OCI-LY7 (cell line): ENCODE measurements at regions of chr6 and their contacts with region 1.

Region 1: DNA sequence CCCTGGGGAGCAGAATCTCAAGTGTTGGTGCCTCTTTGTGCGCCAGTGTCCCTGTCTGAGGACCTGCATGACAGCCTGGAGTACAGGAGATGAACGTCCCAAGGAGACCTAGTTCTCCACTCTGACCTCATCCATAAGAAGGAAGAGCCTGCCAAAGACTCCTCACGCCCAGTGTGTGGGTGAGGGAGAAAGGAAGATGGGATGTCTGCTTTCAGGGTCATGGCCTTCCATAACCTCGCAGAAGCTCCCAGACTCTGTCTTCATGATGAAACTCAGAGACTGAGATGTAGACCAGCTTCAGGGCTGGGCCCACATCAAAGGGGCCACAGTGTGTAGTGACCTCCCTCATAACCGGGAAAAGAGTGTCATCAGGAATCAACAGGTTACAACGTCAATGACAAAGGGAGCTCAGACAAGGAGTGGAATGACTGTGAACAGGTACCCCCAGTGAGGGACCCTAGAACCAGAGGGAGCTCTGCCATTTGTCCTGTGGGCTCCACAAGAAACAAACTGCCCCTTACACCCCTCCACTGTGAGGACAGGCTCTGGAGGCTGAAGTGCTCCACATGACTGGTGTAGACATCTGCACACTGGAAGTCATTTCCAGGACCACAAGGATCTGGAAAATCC is 8.1 kb downstream of the HLA-DQB1 start:
- DNase-seq: no peak
- H3K4me3 ChIP-seq: peak overlapping the region; percentile 2
- H3K27ac ChIP-seq: peak overlapping the region; percentile 76
- H3K4me1 ChIP-seq: peaks cover 36% of the 10 kb centered on the region
- CTCF ChIP-seq: no peak

Region 2: DNA sequence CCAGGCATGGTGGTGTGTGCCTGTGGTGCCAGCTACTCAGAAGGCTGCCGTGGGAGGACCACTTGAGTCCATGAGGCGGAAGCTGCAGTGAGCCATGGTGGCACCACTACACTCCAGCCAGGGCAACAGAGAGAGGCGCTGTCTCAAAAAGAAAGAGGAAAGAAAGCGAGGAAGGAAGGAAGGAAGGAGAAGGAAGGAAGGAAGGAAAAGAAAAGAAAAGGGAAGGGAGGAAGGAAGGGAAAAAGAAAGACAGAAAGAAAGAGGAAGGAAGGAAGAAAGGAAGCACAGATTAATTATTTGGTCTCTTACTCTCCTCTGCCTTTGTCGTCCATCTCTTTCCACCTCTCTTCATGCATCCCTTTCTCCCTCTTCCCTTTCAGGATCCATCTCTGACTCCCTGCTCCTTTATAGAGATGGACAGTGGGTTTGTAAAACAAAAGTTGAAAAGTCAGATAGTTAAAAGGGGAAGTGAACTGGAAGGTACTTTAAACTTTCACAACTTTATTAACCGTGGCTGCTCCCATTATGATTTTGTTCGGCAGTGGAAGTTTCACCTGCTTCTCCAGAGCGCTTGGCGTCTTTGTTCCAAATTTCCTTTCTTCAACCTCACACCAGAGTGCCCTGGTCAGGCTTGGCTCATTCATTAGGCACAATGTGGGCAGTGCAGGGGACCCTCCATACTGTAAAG is 19.7 kb before region 1 on chr6:
- CTCF ChIA-PET with region 1: no interaction called
- POLR2A ChIA-PET with region 1: no interaction called
- intact Hi-C with region 1: no loop called
- DNase-seq: no peak
- H3K4me3 ChIP-seq: no peak overlapping the region
- H3K27ac ChIP-seq: no peak overlapping the region
- H3K4me1 ChIP-seq: peaks cover 28% of the 10 kb centered on the region
- CTCF ChIP-seq: no peak

Region 3: GRCh38 chr6:32752580-32752979 is 94.2 kb after region 1 on chr6:
- CTCF ChIA-PET with region 1: no interaction called
- POLR2A ChIA-PET with region 1: no interaction called
- intact Hi-C with region 1: loop called (anchors 5 kb)
- DNase-seq: no peak
- H3K4me3 ChIP-seq: no peak overlapping the region
- H3K27ac ChIP-seq: no peak overlapping the region
- H3K4me1 ChIP-seq: no peaks in the 10 kb centered on the region
- CTCF ChIP-seq: no peak

Region 4: GRCh38 chr6:33271458-33272274 is 613.3 kb after region 1 on chr6 and contains the starts of genes RPS18 and VPS52:
- CTCF ChIA-PET with region 1: no interaction called
- POLR2A ChIA-PET with region 1: no interaction called
- intact Hi-C with region 1: no loop called
- DNase-seq: peak; percentile 99
- H3K4me3 ChIP-seq: peak within 1 kb of the TSS; percentile 97
- H3K27ac ChIP-seq: peak within 1 kb of the TSS; percentile 93
- H3K4me1 ChIP-seq: peaks cover 43% of the 10 kb centered on the region
- CTCF ChIP-seq: no peak; the same call in 1 of the 2 replicates
- total RNA-seq, gene RPS18: 7,191 and 8,620 TPM in 2 replicates
- total RNA-seq, gene VPS52: 50.4 and 53.5 TPM in 2 replicates